ENCODE measurements at regions of chr14 and their contacts with region 1.

Region 1: DNA sequence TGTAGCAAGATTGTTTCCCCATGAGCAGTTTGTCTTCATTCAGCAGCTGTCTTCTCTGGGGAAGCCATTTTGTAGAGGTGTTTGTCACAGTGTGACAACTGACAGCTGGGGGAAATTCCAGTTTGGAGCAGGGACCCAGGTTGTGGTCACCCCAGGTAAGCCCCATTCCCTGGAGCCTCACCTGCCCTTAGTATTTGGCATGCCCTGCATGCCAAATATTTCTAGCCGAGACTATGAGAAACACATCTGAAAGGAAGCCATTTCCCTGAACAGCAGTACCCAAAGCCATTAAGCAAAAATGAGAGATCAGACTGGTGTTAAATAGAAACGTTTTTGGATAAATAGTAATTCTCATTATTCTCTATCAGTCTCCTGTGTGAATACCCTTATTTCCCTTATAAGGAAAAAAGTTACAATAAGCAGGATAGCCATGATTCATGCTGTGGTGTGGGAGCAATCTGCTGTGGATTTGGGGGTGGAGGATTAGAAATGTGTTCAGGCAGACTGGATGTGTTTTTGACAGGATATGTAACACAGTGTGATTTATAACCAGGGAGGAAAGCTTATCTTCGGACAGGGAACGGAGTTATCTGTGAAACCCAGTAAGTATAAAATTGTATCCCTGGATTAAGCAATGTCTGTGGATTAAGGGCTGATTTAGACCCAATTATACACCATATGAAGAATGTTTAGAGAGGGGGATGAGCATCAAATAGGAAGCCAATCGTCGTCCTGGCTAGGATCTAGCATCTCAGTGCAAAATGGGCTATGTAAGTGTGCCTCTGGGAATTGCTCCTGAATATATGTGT is 68.9 kb downstream of the DAD1 start:
- DNase-seq: no peak
- H3K4me3 Mint-ChIP-seq: peak overlapping the region; percentile 78
- H3K27ac Mint-ChIP-seq: peak overlapping the region; percentile 91
- H3K4me1 Mint-ChIP-seq: peaks cover 96% of the 10 kb centered on the region
- H3K27me3 Mint-ChIP-seq: no peaks in the 10 kb centered on the region

Region 2: GRCh38 chr14:22491683-22492621 is 28.1 kb before region 1 on chr14:
- CTCF ChIA-PET with region 1: no interaction called
- POLR2A ChIA-PET with region 1: interaction called, 707 read pairs
- DNase-seq: no peak
- H3K4me3 Mint-ChIP-seq: peak overlapping the region; percentile 80
- H3K27ac Mint-ChIP-seq: peak overlapping the region; percentile 92
- H3K4me1 Mint-ChIP-seq: peaks cover 34% of the 10 kb centered on the region
- H3K27me3 Mint-ChIP-seq: no peaks in the 10 kb centered on the region

Region 3: DNA sequence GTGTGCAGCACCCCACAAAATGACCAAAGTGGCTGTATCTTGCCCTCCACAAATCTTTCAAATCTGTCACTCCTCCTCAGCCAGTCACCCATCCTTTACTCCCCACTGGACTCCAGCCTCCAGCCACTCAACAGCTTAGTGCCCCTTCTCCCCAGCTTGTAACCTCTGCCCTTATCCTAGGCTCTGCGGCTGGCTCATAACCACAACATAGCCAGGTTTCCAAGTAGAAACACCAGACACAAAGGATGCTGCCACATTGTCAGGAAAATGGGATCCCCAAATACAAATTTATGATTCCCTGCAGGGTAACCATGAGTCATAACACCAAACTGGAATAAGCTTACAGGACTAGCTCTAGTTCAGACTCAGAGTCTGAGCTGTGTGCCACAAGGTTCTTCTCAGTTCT is 261.5 kb after region 1 on chr14:
- CTCF ChIA-PET with region 1: no interaction called
- POLR2A ChIA-PET with region 1: no interaction called
- DNase-seq: no peak
- H3K4me3 Mint-ChIP-seq: no peak overlapping the region
- H3K27ac Mint-ChIP-seq: no peak overlapping the region
- H3K4me1 Mint-ChIP-seq: peaks cover 5% of the 10 kb centered on the region
- H3K27me3 Mint-ChIP-seq: no peaks in the 10 kb centered on the region

Measured in activated CD4-positive, alpha-beta memory T cell treated with anti-CD3 and anti-CD28 coated beads, Interleukin-2, amount 10 ng/mL, durations not matched to agents 7 days and 5 days (primary cell).